Transverse colon (tissue), 4 donors: ENCODE measurements at regions of chr21 and their contacts with region 1.

Region 1: GRCh38 chr21:28345934-28346333 is 646.7 kb downstream of the LTN1 start:
- DNase-seq: no peak
- H3K4me3 ChIP-seq: no peak overlapping the region
- H3K27ac ChIP-seq: no peak overlapping the region
- H3K4me1 ChIP-seq: no peaks in the 10 kb centered on the region
- H3K27me3 ChIP-seq: no peaks in the 10 kb centered on the region
- CTCF ChIP-seq: no peak
- EP300 ChIP-seq: no peak
- POLR2A ChIP-seq: no peak

Region 2: DNA sequence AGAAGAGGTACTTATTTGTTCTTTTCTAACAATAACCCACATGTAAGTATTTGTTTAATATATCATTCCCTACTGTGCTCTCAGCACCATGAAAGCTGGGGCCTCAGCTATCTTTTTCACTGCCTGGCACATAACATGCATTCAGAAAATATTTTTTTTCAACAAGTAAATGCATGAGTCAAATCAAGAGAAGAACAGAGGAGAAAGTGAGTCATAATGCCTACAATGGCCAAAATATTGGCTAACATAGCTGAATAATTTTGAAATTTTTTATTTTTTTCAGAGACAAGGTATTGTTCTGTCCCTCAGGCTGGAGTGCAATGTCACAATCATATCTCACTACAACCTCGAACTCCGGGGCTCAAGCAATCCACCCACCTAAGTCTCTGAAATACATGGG is 1126.9 kb before region 1 on chr21:
- in situ Hi-C with region 1: no loop called
- intact Hi-C with region 1: loop called (anchors 5 kb)
- DNase-seq: no peak
- H3K4me3 ChIP-seq: no peak overlapping the region
- H3K27ac ChIP-seq: no peak overlapping the region
- H3K4me1 ChIP-seq: no peaks in the 10 kb centered on the region
- H3K27me3 ChIP-seq: no peaks in the 10 kb centered on the region
- CTCF ChIP-seq: no peak
- EP300 ChIP-seq: no peak
- POLR2A ChIP-seq: no peak

Region 3: DNA sequence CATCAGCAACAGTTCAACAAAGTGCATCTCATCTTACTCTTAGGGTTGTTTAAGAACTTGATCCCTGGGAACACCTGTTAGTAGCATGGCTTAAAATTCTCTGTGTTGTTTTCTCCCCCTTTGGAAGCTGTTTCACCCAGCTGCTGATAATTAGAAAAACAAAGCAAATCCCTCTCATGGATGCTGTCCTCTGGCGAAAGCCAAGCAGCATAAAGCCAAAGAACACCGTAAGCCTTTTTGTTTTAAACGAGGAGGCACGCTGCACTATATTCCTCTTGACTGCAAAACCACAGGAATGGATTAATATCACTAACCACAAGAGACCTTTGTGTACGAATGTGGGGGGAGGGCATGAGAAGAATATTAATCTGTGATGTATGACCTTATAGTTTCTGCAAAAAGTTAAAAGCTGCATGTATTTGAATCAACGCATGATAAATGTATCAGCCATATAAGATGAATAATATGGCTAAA is 276.4 kb before region 1 on chr21:
- in situ Hi-C with region 1: no loop called
- intact Hi-C with region 1: no loop called
- DNase-seq: no peak
- H3K4me3 ChIP-seq: no peak overlapping the region
- H3K27ac ChIP-seq: no peak overlapping the region
- H3K4me1 ChIP-seq: peaks cover 0 to 5% (median 3%) of the 10 kb centered on the region in 4 donors
- H3K27me3 ChIP-seq: no peaks in the 10 kb centered on the region
- CTCF ChIP-seq: no peak
- EP300 ChIP-seq: no peak
- POLR2A ChIP-seq: no peak

Region 4: GRCh38 chr21:28371713-28372112 is 25.8 kb after region 1 on chr21:
- in situ Hi-C with region 1: no loop called
- intact Hi-C with region 1: no loop called
- DNase-seq: no peak
- H3K4me3 ChIP-seq: no peak overlapping the region
- H3K27ac ChIP-seq: no peak overlapping the region
- H3K4me1 ChIP-seq: no peaks in the 10 kb centered on the region
- H3K27me3 ChIP-seq: no peaks in the 10 kb centered on the region
- CTCF ChIP-seq: no peak
- EP300 ChIP-seq: no peak
- POLR2A ChIP-seq: no peak